Activated CD4-positive, alpha-beta memory T cell treated with anti-CD3 and anti-CD28 coated beads for 36 hours (primary cell): ENCODE measurements at regions of chr16 and their contacts with region 1.

Region 1: GRCh38 chr16:30445408-30446202 is at the start of gene SEPHS2:
- DNase-seq: peak; percentile 98
- H3K4me3 Mint-ChIP-seq: peak within 1 kb of the TSS; percentile 90
- H3K27ac Mint-ChIP-seq: peak within 1 kb of the TSS; percentile 91
- H3K4me1 Mint-ChIP-seq: peaks cover 37% of the 10 kb centered on the region
- H3K27me3 Mint-ChIP-seq: no peaks in the 10 kb centered on the region
- total RNA-seq, gene SEPHS2: 61.4 to 61.7 TPM

Region 2: GRCh38 chr16:30370444-30371247 is 75.0 kb before region 1 on chr16 and contains the start of gene TBC1D10B:
- CTCF ChIA-PET with region 1: no interaction called
- POLR2A ChIA-PET with region 1: no interaction called
- intact Hi-C with region 1: no loop called
- DNase-seq: peak; percentile 100
- H3K4me3 Mint-ChIP-seq: peak within 1 kb of the TSS; percentile 91
- H3K27ac Mint-ChIP-seq: peak within 1 kb of the TSS; percentile 95
- H3K4me1 Mint-ChIP-seq: peaks cover 34% of the 10 kb centered on the region
- H3K27me3 Mint-ChIP-seq: peaks cover 3% of the 10 kb centered on the region
- total RNA-seq, gene TBC1D10B: 54.7 to 54.8 TPM

Region 3: GRCh38 chr16:30458561-30459394 is 13.2 kb after region 1 on chr16:
- CTCF ChIA-PET with region 1: interaction called, 43 read pairs
- POLR2A ChIA-PET with region 1: interaction called, 7 read pairs
- intact Hi-C with region 1: no loop called
- DNase-seq: peak; percentile 97
- H3K4me3 Mint-ChIP-seq: peak overlapping the region; percentile 63
- H3K27ac Mint-ChIP-seq: peak overlapping the region; percentile 96
- H3K4me1 Mint-ChIP-seq: peaks cover 43% of the 10 kb centered on the region
- H3K27me3 Mint-ChIP-seq: no peaks in the 10 kb centered on the region

Region 4: DNA sequence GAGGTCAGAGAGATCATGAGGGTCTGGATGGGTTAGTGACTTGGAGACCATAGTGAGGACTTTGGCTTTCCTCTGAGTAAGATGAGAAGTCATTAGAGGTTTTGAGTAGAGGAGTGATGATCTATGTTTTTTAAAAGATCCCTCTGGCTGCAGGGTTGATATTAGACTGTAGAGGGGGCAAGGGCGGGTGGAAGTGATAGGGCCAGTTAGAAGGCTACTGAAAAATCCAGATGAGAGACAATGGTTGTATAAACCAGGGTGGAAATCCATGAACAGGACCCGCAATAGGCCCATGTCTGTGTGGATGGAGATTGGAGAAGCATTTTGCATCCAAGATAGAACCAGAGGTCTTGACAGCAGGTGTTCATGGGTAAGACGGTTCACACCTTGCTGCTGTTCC is 36.8 kb after region 1 on chr16:
- CTCF ChIA-PET with region 1: interaction called, 15 read pairs
- POLR2A ChIA-PET with region 1: no interaction called
- intact Hi-C with region 1: loop called (anchors 5 kb)
- DNase-seq: peak; percentile 16
- H3K4me3 Mint-ChIP-seq: no peak overlapping the region
- H3K27ac Mint-ChIP-seq: peak overlapping the region; percentile 38
- H3K4me1 Mint-ChIP-seq: peaks cover 50% of the 10 kb centered on the region
- H3K27me3 Mint-ChIP-seq: no peaks in the 10 kb centered on the region

Region 5: DNA sequence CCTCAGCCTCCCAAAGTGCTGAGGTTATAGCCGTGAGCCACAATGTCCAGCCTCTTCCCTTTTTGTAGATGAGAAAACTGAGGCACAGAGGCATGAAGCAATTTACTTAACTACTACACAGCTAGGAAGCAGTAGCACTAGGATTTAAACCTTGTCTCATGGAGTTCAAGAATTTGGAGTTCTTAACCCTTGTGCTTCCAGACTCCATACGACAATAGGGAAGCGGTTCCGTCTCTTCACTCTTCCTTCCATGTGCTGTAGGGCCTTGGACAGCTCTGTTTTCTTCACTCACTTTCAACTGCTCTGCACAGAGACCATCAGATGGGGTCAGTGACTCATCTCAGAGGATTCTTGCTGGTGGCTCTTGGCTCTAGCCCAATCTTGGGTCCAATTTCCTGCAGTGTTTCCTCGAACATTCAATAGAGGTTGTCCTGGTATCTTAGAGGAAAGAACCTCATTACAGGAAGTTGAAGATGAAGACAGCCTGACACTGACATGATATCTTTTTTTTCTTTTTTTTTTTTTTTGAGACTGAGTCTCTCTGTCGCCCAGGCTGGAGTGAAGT is 46.2 kb after region 1 on chr16:
- CTCF ChIA-PET with region 1: interaction called, 20 read pairs
- POLR2A ChIA-PET with region 1: no interaction called
- intact Hi-C with region 1: loop called (anchors 5 kb)
- DNase-seq: peak; percentile 52
- H3K4me3 Mint-ChIP-seq: no peak overlapping the region
- H3K27ac Mint-ChIP-seq: peak overlapping the region; percentile 71
- H3K4me1 Mint-ChIP-seq: peaks cover 25% of the 10 kb centered on the region
- H3K27me3 Mint-ChIP-seq: no peaks in the 10 kb centered on the region

Region 6: DNA sequence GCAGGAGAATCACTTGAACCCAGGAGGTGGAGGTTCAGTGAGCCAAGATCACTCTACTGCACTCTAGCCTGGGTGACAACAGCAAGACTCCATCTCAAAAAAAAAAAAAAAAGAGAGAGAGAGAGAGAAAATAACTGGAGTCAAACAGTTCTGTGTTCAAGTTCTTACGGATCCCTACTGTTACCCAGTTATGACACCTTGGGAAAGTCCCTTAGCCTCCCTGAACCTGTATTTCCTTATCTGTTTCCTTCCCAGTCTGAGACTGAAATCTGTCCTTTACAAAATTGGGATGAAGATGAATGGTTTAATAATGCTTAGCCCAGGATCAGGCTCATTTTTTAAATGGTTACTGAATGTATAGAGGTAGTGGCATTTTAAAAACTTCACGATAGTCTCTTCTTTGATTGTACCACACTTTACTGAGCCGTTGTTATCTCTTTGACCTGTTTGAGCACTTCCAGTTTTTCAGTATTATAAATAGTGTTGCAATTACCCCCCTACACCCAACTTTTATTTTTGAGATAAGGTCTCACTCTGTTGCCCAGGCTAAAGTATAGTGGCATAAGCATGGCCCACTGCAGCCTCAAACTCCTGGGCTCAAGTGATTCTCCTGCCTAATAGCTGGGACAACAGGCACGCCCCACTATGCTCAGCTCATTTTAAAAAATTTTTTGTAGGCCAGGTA is 63.6 kb after region 1 on chr16:
- CTCF ChIA-PET with region 1: interaction called, 11 read pairs
- POLR2A ChIA-PET with region 1: no interaction called
- intact Hi-C with region 1: no loop called
- DNase-seq: no peak
- H3K4me3 Mint-ChIP-seq: no peak overlapping the region
- H3K27ac Mint-ChIP-seq: peak overlapping the region; percentile 66
- H3K4me1 Mint-ChIP-seq: peaks cover 2% of the 10 kb centered on the region
- H3K27me3 Mint-ChIP-seq: no peaks in the 10 kb centered on the region

Region 7: GRCh38 chr16:30526823-30527635 is 81.4 kb after region 1 on chr16:
- CTCF ChIA-PET with region 1: interaction called, 6 read pairs
- POLR2A ChIA-PET with region 1: interaction called, 3 read pairs
- intact Hi-C with region 1: loop called (anchors 2 kb)
- DNase-seq: peak; percentile 98
- H3K4me3 Mint-ChIP-seq: peak overlapping the region; percentile 73
- H3K27ac Mint-ChIP-seq: peak overlapping the region; percentile 86
- H3K4me1 Mint-ChIP-seq: peaks cover 38% of the 10 kb centered on the region
- H3K27me3 Mint-ChIP-seq: no peaks in the 10 kb centered on the region

Region 8: GRCh38 chr16:30707421-30707820 is 261.8 kb after region 1 on chr16:
- CTCF ChIA-PET with region 1: no interaction called
- POLR2A ChIA-PET with region 1: no interaction called
- intact Hi-C with region 1: no loop called
- DNase-seq: no peak
- H3K4me3 Mint-ChIP-seq: no peak overlapping the region
- H3K27ac Mint-ChIP-seq: no peak overlapping the region
- H3K4me1 Mint-ChIP-seq: no peaks in the 10 kb centered on the region
- H3K27me3 Mint-ChIP-seq: no peaks in the 10 kb centered on the region